Calu3 (cell line): ENCODE measurements at regions of chr3 and their contacts with region 1.

Region 1: DNA sequence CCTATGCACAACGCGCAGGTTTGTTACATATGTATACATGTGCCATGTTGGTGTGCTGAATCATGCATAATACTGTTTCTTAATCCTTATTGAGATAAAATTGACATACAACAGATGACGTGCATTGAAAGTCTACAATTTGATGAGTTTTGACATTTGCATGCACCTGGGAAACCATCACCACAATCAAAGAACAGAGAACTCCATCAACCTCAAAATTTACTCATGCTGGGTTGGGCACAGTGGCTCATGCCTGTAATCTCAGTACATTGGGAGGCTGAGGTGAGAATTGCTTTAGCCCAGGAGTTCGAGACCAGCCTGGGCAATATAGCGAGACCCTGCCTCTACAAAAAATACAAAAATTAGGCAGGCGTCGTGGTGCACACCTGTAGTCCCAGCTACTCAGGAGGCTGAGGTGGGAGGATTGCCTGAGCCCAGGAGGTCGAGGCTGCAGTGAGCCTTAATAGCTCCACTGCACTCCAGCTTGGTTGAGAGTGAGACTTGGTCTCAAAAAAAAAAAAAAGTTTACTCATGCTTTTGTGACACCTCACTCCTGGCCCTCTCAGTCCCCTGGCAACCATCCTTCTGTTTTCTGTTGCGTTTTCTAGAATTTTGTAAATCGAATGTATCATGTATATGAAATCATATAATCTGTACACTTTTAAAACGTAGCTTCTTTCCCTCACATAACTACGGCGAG is 56.6 kb downstream of the BHLHE40 start:
- DNase-seq: no peak
- H3K4me3 Mint-ChIP-seq: no peak overlapping the region
- H3K27ac Mint-ChIP-seq: no peak overlapping the region
- H3K4me1 Mint-ChIP-seq: no peaks in the 10 kb centered on the region
- H3K27me3 Mint-ChIP-seq: no peaks in the 10 kb centered on the region
- CTCF ChIP-seq: no peak

Region 2: GRCh38 chr3:4898454-4899313 is 137.2 kb before region 1 on chr3:
- CTCF ChIA-PET with region 1: interaction called, 12 read pairs
- intact Hi-C with region 1: no loop called
- DNase-seq: no peak
- H3K4me3 Mint-ChIP-seq: no peak overlapping the region
- H3K27ac Mint-ChIP-seq: no peak overlapping the region
- H3K4me1 Mint-ChIP-seq: peaks cover 32% of the 10 kb centered on the region
- H3K27me3 Mint-ChIP-seq: no peaks in the 10 kb centered on the region
- CTCF ChIP-seq: no peak